Right ventricle myocardium inferior (tissue), 1 donor: ENCODE measurements at regions of chr1 and their contacts with region 1.

Region 1: DNA sequence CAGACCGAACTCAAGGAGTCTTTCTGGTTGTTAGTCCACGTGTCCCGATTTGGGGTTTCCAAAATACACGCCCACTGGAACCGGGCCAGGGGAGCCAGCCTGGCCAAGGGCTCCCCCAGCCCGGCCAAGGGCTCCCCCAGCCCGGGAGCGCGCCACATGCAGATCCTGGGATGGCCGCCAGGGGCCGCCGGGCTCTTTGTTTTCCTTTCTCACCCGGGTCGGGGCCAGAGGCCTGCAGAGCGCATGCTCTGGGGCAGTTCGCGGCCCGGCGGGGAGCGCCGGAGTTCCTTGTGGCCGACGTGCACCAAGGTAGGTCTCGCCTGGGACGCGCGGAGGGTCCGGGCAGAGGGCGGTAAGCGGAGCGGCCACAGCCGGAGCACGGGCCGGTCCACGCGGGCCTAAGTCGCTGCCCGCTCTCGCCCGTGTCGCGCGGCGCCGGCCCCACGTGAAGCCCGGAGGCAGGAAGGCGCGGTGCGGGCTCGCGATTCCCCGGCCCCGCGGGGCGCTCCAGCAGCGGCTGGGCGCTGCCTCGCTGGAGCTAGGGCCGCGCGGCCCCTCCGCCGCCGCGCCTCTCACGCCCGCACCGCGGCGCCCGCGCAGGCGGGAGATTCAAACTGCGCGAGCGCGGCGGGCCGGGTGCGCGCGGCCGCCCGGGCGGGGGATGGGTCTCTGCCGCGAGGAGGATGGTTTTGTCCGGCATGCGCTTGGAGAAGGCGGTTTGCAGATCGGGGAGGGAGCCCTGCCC is 12.3 kb downstream of the RCC1 start:
- DNase-seq: peak; percentile 97
- ATAC-seq: peak; percentile 95

Region 2: GRCh38 chr1:28602536-28603439 is 84.6 kb after region 1 on chr1:
- intact Hi-C with region 1: loop called (anchors 2 kb)
- DNase-seq: no peak
- ATAC-seq: peak; percentile 58